Thyroid gland (tissue), 4 donors: ENCODE measurements at regions of chr17 and their contacts with region 1.

Region 1: DNA sequence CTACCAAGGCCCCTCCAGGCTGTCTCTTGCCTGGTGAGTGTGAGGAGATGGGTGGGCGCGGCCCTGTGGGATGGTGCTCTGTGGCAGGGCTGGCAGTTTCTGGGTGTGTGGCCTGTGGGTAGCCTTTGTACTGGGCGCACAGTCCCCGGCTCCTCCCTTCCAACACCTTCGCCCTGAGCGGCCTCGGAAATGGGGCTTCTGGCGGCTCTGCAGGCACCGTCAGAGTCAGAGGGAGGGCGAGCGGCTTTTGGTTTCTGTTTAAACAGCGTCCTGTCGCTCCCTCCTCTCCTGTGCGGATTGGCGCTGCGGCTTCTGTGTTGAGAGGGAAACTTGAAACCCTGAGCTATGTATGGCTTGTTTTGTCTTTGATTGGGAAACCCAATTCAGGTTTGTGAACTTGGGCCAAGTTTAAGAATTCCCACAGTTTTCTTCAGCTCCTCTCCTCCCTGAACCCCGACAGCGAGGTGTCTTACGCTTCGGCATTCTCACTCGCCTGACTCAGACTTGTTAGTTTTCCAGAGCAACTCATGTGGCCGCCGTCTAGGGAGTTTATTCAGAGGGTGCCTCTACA is 8.3 kb upstream of the ZNF750 start:
- DNase-seq: peak; percentile 84 to 90
- H3K4me3 ChIP-seq: no peak overlapping the region
- H3K27ac ChIP-seq: peak overlapping the region; percentile 89 to 94 (median 93)
- H3K4me1 ChIP-seq: peaks cover 9 to 12% of the 10 kb centered on the region in 2 donors
- H3K27me3 ChIP-seq: no peaks in the 10 kb centered on the region
- CTCF ChIP-seq: no peak
- POLR2A ChIP-seq: peak in 1 of 2 donors; percentile 70

Region 2: GRCh38 chr17:82486186-82487094 is 361.7 kb before region 1 on chr17:
- intact Hi-C with region 1: no loop called
- DNase-seq: no peak
- H3K4me3 ChIP-seq: no peak overlapping the region
- H3K27ac ChIP-seq: no peak overlapping the region
- H3K4me1 ChIP-seq: peaks cover 4 to 9% of the 10 kb centered on the region in 2 donors
- H3K27me3 ChIP-seq: no peaks in the 10 kb centered on the region
- CTCF ChIP-seq: no peak
- POLR2A ChIP-seq: no peak

Region 3: GRCh38 chr17:82892899-82893565 is 44.9 kb after region 1 on chr17:
- intact Hi-C with region 1: loop called (anchors 10 kb)
- DNase-seq: peak; percentile 96 to 97
- H3K4me3 ChIP-seq: no peak overlapping the region
- H3K27ac ChIP-seq: peak overlapping the region; percentile 76 to 92 (median 87)
- H3K4me1 ChIP-seq: peaks cover 66% of the 10 kb centered on the region in 2 donors
- H3K27me3 ChIP-seq: no peaks in the 10 kb centered on the region
- CTCF ChIP-seq: no peak
- POLR2A ChIP-seq: no peak